AG04450 (cell line): ENCODE measurements at regions of chr2 and their contacts with region 1.

Region 1: GRCh38 chr2:37201766-37202165 is 5.5 kb downstream of the CEBPZOS start:
- DNase-seq: no peak
- H3K4me3 ChIP-seq: no peak overlapping the region
- H3K27ac ChIP-seq: no peak overlapping the region
- H3K27me3 ChIP-seq: no peaks in the 10 kb centered on the region
- CTCF ChIP-seq: no peak

Region 2: DNA sequence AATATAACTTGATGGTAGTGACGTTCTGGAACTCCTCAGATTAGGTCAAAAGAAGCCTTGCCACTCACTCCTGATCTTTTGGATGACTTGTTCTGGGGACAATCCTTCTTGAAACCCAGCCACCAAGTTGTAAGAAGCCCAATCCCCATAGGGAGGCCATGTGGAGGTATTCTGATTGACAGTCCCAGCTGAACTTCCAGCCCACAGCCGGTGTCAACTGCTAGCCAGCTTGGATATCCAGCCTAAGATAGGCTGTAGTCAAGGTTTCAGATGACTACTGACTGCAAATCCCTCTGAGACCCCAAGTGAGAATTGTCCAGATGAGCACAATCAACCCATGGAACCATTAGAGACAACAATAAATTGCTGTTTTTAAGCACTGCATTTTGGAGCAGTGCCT is 76.3 kb before region 1 on chr2:
- CTCF ChIA-PET with region 1: no interaction called
- POLR2A ChIA-PET with region 1: interaction called, 10 read pairs
- DNase-seq: no peak
- H3K4me3 ChIP-seq: no peak overlapping the region
- H3K27ac ChIP-seq: no peak overlapping the region
- H3K27me3 ChIP-seq: no peaks in the 10 kb centered on the region
- CTCF ChIP-seq: no peak

Region 3: GRCh38 chr2:37189452-37190153 is 12.2 kb before region 1 on chr2:
- CTCF ChIA-PET with region 1: no interaction called
- POLR2A ChIA-PET with region 1: interaction called, 15 read pairs
- DNase-seq: no peak
- H3K4me3 ChIP-seq: no peak overlapping the region
- H3K27ac ChIP-seq: no peak overlapping the region
- H3K27me3 ChIP-seq: no peaks in the 10 kb centered on the region
- CTCF ChIP-seq: no peak